Ovary (tissue), 10 donors: ENCODE measurements at regions of chr7 and their contacts with region 1.

Region 1: DNA sequence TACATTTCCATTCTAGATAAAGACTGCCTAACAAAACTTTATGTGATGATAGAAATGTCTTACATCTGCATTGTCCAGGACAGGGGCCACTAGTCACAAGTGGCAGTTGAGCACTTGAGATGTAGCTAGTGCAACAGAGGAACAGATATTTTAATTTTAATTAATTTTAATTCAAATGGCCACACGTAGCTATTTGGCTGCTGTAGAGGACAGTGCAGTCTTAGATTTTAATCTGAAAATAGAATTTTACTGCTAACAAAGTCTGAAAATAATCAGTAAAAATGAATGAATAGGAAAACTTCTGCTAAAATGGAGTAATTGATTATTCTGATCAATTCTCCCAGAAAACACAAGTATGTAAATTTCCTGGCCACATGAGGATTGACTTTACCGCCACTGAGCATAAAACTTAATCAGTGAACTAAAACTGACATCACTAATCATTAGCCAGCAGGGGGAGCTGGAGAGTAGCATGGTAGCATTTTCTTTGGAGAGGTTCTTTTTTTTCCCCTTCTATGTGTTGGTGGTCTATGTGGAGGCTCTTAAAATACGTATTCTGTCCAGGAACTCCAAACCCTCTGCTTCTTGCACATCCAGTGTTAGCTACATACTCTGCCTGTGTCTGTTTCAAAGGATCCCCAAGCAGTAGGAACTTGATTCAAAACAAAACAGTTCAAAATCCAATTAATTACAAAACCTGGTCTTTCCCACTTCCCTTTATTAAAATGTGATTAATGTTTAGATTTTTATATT is 52.1 kb downstream of the TSPAN12 start:
- DNase-seq: peak in 4 of 5 donors; percentile 21 to 62 (median 36)
- H3K4me3 ChIP-seq: no peak overlapping the region
- H3K27ac ChIP-seq: no peak overlapping the region
- H3K4me1 ChIP-seq: no peaks in the 10 kb centered on the region
- H3K27me3 ChIP-seq: no peaks in the 10 kb centered on the region
- CTCF ChIP-seq: peak; percentile 39 to 52 (median 50)
- EP300 ChIP-seq: no peak
- POLR2A ChIP-seq: no peak

Region 2: DNA sequence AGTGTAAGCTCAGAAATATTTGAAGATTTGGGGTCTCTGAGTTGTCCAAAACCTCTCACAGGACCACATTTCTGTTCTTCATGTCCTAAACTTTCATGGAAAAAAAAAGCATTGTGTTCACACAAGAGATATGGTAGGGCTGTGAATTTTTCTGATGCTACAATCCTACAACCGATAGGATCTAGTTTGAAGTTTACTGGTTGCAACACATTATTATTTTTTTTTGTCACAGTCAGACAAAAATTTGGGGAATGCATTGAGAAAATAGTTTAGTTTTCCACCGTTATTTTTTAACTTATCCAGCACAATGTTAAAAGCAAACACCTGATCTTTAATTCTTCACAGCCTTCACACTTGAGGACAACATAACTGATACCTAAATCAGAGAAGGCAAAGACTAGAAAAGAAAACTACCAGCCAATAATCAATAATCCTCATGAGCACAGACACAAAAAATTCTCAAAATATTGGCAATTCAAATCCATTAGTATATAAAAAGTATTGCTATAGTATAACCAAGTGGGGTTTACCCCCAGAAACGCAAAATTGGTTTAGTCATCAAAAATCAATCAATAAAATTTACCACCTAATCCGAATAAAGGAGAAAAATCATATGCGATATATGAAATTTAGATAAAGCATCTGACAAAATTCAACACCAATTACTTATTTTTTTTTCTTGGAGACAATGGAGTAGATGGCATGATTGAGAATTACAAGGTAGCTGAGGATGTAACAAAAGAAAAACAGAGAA is 133.4 kb after region 1 on chr7:
- intact Hi-C with region 1: loop called in 1 of 4 experiments (anchors 5 kb)
- DNase-seq: no peak
- H3K4me3 ChIP-seq: no peak overlapping the region
- H3K27ac ChIP-seq: no peak overlapping the region
- H3K4me1 ChIP-seq: no peaks in the 10 kb centered on the region
- H3K27me3 ChIP-seq: no peaks in the 10 kb centered on the region
- CTCF ChIP-seq: no peak
- EP300 ChIP-seq: no peak
- POLR2A ChIP-seq: no peak

Region 3: DNA sequence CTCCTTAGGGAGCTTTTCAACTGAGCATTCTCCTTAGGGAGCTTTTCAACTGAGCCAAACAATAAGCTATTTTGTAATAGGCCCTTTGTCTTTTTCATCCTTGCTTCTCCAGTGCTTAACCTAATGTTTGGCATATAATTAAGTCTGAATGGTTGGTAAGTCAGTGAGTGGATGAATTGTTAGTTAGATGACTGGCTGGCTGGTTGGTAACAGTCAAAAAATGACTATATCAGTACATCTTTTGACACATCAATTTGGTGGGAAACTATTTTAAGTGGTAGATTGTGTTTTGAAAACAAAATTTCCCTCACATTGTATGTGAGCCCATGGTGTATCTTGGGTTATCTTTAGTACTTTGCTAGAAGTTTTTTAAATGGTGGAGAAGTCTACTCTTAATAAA is 161.1 kb after region 1 on chr7:
- intact Hi-C with region 1: no loop called
- DNase-seq: no peak
- H3K4me3 ChIP-seq: no peak overlapping the region
- H3K27ac ChIP-seq: no peak overlapping the region
- H3K4me1 ChIP-seq: no peaks in the 10 kb centered on the region
- H3K27me3 ChIP-seq: no peaks in the 10 kb centered on the region
- CTCF ChIP-seq: no peak
- EP300 ChIP-seq: no peak
- POLR2A ChIP-seq: no peak

Region 4: DNA sequence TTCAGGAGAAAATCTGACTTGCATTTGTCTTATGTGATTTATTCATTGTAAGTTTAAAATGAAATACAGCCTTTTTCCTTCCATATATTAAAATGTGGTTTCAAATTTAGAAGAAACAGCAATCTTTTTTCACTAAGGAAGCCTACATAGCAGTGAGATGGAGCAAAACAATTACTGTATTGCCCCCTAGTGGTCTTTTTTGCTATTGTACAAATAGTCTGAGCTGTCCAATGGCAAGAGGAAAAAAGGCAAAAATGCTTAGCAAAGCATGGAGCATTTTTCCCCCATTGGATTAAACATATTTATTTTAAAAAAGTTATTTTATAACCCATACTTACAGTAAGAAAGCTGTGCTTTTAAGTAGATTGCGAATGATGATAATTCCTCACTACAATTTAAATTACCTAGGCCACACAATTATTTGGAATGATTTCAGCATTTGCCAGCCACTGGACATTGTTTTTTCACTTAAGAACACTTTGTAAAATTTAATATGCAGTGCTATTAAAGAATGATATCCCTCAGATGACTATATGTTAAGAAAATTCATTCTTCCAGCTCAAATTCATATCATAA is 302.2 kb after region 1 on chr7:
- intact Hi-C with region 1: loop called in 1 of 4 experiments (anchors 5 kb)
- DNase-seq: no peak
- H3K4me3 ChIP-seq: no peak overlapping the region
- H3K27ac ChIP-seq: no peak overlapping the region
- H3K4me1 ChIP-seq: no peaks in the 10 kb centered on the region
- H3K27me3 ChIP-seq: no peaks in the 10 kb centered on the region
- CTCF ChIP-seq: peak; percentile 67 to 82 (median 69)
- EP300 ChIP-seq: no peak
- POLR2A ChIP-seq: no peak